ENCODE measurements at regions of chr18 and their contacts with region 1.

Region 1: DNA sequence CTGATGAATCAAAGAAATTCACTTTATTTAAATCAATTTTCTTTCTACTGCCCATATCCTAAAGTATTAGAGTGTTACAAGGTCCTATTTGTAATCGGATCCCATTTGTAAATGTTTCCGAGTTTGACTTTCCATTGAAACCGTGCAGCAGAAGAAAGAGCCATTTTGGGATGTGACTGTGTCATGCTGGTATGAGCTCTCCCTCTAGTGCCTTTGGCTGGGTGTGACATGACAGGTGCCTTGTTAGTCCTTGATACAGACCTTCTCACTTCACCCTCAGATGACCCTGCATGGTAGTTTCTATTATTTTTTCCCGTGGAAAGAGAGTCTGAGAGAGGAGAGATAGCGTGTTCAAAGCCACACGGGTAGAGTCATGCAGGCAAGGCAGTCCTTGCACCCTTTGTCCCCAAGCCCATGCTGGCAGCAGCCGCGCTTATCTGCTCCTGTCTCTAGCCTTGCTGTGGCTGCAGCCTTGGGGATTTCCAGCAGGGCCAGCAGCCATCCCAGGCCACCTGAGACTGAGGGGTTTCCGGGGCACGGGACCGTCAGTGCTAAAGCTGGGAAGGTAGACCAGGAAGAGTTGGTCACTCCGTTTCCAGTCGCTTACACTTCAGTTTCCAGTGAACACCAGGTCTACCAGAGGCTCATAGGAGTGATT is 21.4 kb downstream of the CHMP1B start:
- DNase-seq: peak; percentile 68 to 71
- H3K4me3 ChIP-seq: no peak overlapping the region
- H3K4me3 Mint-ChIP-seq: no peak overlapping the region
- H3K27ac Mint-ChIP-seq: no peak overlapping the region
- H3K4me1 ChIP-seq: peaks cover 10% of the 10 kb centered on the region; the same call in 1 of the 2 replicates
- H3K4me1 Mint-ChIP-seq: peaks cover 7% of the 10 kb centered on the region
- H3K27me3 ChIP-seq: no peaks in the 10 kb centered on the region
- H3K27me3 Mint-ChIP-seq: no peaks in the 10 kb centered on the region
- CTCF ChIP-seq: peak; percentile 74 to 80

Region 2: DNA sequence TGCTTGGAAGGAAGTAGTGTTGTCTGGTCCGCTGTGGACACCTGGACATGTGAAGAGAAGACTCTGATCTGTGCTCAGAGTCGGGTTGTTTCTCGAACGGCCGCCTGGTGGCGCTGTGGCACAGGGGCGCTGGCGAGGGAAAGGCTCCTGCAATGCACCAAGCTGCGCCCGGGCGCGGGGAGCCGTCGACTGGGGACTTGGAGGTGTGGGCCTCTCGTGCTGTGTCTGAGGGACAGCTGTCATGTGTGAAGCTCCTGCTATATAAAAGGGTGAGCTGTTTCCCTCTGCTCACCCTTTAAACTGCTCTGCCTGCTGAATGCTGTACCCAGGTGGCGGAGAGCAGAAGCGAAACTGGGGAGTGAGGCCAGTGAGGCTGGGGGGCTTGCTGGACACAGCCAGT is 139.6 kb before region 1 on chr18:
- CTCF ChIA-PET with region 1: interaction called, 9 read pairs
- POLR2A ChIA-PET with region 1: no interaction called
- intact Hi-C with region 1: loop called (anchors 1 kb)
- DNase-seq: peak; percentile 81 to 88
- H3K4me3 ChIP-seq: no peak overlapping the region
- H3K4me3 Mint-ChIP-seq: no peak overlapping the region
- H3K27ac Mint-ChIP-seq: no peak overlapping the region
- H3K4me1 ChIP-seq: peaks cover 4% of the 10 kb centered on the region; the same call in 1 of the 2 replicates
- H3K4me1 Mint-ChIP-seq: no peaks in the 10 kb centered on the region
- H3K27me3 ChIP-seq: no peaks in the 10 kb centered on the region
- H3K27me3 Mint-ChIP-seq: no peaks in the 10 kb centered on the region
- CTCF ChIP-seq: peak; percentile 92 to 96